Naive thymus-derived CD4-positive, alpha-beta T cell (primary cell): ENCODE measurements at regions of chr18 and their contacts with region 1.

Region 1: GRCh38 chr18:45690975-45691815 is 32.8 kb upstream of the SLC14A1 start:
- DNase-seq: peak; percentile 42 to 80 (median 70)
- ATAC-seq: peak; percentile 30
- H3K4me3 ChIP-seq: no peak overlapping the region
- H3K4me3 Mint-ChIP-seq: peak overlapping the region in 3 of 10 donors; percentile 19 to 60 (median 31)
- H3K27ac ChIP-seq: no peak overlapping the region
- H3K27ac Mint-ChIP-seq: peak overlapping the region in 2 of 9 donors; percentile 14 to 15
- H3K4me1 ChIP-seq: peaks cover 38 to 42% of the 10 kb centered on the region in 2 donors
- H3K4me1 Mint-ChIP-seq: peaks cover 29 to 53% (median 43%) of the 10 kb centered on the region in 7 donors
- H3K27me3 ChIP-seq: no peaks in the 10 kb centered on the region
- H3K27me3 Mint-ChIP-seq: peaks cover 0 to 58% (median 5%) of the 10 kb centered on the region in 5 donors

Region 2: GRCh38 chr18:45621061-45621511 is 70.1 kb before region 1 on chr18:
- CTCF ChIA-PET with region 1: no interaction called
- POLR2A ChIA-PET with region 1: no interaction called
- intact Hi-C with region 1: loop called in 1 of 2 experiments (anchors 1 kb)
- DNase-seq: peak in 8 of 9 donors; percentile 8 to 61 (median 40)
- ATAC-seq: peak; percentile 76
- H3K4me3 ChIP-seq: no peak overlapping the region
- H3K4me3 Mint-ChIP-seq: no peak overlapping the region
- H3K27ac ChIP-seq: no peak overlapping the region
- H3K27ac Mint-ChIP-seq: no peak overlapping the region
- H3K4me1 ChIP-seq: no peaks in the 10 kb centered on the region
- H3K4me1 Mint-ChIP-seq: no peaks in the 10 kb centered on the region
- H3K27me3 ChIP-seq: no peaks in the 10 kb centered on the region
- H3K27me3 Mint-ChIP-seq: peaks cover 0 to 27% (median 10%) of the 10 kb centered on the region in 5 donors

Region 3: DNA sequence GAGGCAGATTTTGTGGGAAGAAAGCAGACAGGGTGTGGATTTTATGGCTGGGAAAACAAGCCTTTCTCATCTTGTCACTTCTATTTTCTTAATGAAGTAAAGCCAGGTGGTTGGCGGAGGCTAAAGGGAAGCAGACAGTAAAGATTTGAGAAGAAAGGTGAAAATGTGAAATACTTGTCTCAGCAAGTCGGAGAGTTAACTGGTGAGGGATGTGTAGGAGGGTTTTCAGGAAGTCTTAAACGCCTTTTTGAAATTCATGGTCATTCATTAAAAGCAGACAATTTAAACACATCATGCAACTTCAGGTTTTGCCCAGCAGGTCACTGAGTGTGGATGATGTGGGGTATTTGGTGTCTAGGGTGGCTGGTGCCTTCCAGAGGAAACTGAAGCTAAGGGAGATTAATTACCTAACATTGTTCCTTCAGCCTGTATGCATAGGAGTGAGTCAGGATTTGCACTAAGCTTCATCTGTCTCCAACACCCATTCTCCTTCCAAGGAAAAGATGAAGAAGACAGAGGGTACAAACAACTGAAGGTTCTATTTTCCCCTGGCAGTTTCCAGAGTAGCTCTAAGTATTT is 55.2 kb before region 1 on chr18:
- CTCF ChIA-PET with region 1: no interaction called
- POLR2A ChIA-PET with region 1: no interaction called
- intact Hi-C with region 1: no loop called
- DNase-seq: no peak
- ATAC-seq: no peak
- H3K4me3 ChIP-seq: no peak overlapping the region
- H3K4me3 Mint-ChIP-seq: no peak overlapping the region
- H3K27ac ChIP-seq: no peak overlapping the region
- H3K27ac Mint-ChIP-seq: no peak overlapping the region
- H3K4me1 ChIP-seq: no peaks in the 10 kb centered on the region
- H3K4me1 Mint-ChIP-seq: no peaks in the 10 kb centered on the region
- H3K27me3 ChIP-seq: no peaks in the 10 kb centered on the region
- H3K27me3 Mint-ChIP-seq: peaks cover 0 to 6% (median 0%) of the 10 kb centered on the region in 5 donors

Region 4: GRCh38 chr18:45678850-45679249 is 12.3 kb before region 1 on chr18:
- CTCF ChIA-PET with region 1: no interaction called
- POLR2A ChIA-PET with region 1: interaction called, 6 read pairs
- intact Hi-C with region 1: loop called in 1 of 2 experiments (anchors 1 kb)
- DNase-seq: no peak
- ATAC-seq: no peak
- H3K4me3 ChIP-seq: no peak overlapping the region
- H3K4me3 Mint-ChIP-seq: no peak overlapping the region
- H3K27ac ChIP-seq: no peak overlapping the region
- H3K27ac Mint-ChIP-seq: peak overlapping the region in 1 of 9 donors; percentile 22
- H3K4me1 ChIP-seq: peaks cover 0 to 2% of the 10 kb centered on the region in 2 donors
- H3K4me1 Mint-ChIP-seq: peaks cover 0 to 28% (median 12%) of the 10 kb centered on the region in 7 donors
- H3K27me3 ChIP-seq: no peaks in the 10 kb centered on the region
- H3K27me3 Mint-ChIP-seq: peaks cover 0 to 84% (median 3%) of the 10 kb centered on the region in 5 donors

Region 5: DNA sequence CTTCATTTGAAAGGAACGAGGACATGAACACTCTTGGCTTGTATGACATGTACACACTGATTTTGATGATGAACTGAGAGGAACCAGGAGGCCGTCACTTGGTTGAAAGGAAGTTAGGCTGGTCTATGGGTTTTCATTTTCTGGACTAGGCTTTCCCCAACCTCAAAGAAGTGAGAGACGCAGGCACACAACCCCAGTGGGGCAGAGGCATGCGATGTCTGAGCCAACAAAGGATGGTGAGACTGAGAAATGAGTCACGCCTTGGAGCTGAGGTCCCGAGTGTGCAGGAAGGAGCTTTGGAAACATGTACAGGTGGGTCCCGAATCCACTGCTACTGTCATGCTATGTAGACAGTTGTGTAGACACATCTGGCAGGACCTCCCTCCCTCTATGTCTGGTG is 158.3 kb after region 1 on chr18:
- CTCF ChIA-PET with region 1: interaction called, 3 read pairs
- POLR2A ChIA-PET with region 1: no interaction called
- intact Hi-C with region 1: loop called in 1 of 2 experiments (anchors 1 kb)
- DNase-seq: no peak
- ATAC-seq: no peak
- H3K4me3 ChIP-seq: no peak overlapping the region
- H3K4me3 Mint-ChIP-seq: no peak overlapping the region
- H3K27ac ChIP-seq: no peak overlapping the region
- H3K27ac Mint-ChIP-seq: peak overlapping the region in 2 of 9 donors; percentile 12 to 32
- H3K4me1 ChIP-seq: no peaks in the 10 kb centered on the region
- H3K4me1 Mint-ChIP-seq: peaks cover 0 to 6% (median 4%) of the 10 kb centered on the region in 7 donors
- H3K27me3 ChIP-seq: no peaks in the 10 kb centered on the region
- H3K27me3 Mint-ChIP-seq: no peaks in the 10 kb centered on the region

Region 6: GRCh38 chr18:45967007-45967706 is 276.0 kb after region 1 on chr18 and contains the start of gene EPG5:
- CTCF ChIA-PET with region 1: no interaction called
- POLR2A ChIA-PET with region 1: no interaction called
- intact Hi-C with region 1: loop called (anchors 1 to 2 kb)
- DNase-seq: peak; percentile 73 to 91 (median 90)
- ATAC-seq: peak; percentile 98
- H3K4me3 ChIP-seq: peak within 1 kb of the TSS; percentile 79
- H3K4me3 Mint-ChIP-seq: peak within 1 kb of the TSS; percentile 94 to 100 (median 97)
- H3K27ac ChIP-seq: peak within 1 kb of the TSS; percentile 86
- H3K27ac Mint-ChIP-seq: peak within 1 kb of the TSS; percentile 84 to 98 (median 97)
- H3K4me1 ChIP-seq: peaks cover 14 to 25% of the 10 kb centered on the region in 2 donors
- H3K4me1 Mint-ChIP-seq: peaks cover 33 to 55% (median 47%) of the 10 kb centered on the region in 7 donors
- H3K27me3 ChIP-seq: no peaks in the 10 kb centered on the region
- H3K27me3 Mint-ChIP-seq: no peaks in the 10 kb centered on the region
- total RNA-seq, gene EPG5: 26.0 to 54.8 (median 44.7) TPM

Region 7: DNA sequence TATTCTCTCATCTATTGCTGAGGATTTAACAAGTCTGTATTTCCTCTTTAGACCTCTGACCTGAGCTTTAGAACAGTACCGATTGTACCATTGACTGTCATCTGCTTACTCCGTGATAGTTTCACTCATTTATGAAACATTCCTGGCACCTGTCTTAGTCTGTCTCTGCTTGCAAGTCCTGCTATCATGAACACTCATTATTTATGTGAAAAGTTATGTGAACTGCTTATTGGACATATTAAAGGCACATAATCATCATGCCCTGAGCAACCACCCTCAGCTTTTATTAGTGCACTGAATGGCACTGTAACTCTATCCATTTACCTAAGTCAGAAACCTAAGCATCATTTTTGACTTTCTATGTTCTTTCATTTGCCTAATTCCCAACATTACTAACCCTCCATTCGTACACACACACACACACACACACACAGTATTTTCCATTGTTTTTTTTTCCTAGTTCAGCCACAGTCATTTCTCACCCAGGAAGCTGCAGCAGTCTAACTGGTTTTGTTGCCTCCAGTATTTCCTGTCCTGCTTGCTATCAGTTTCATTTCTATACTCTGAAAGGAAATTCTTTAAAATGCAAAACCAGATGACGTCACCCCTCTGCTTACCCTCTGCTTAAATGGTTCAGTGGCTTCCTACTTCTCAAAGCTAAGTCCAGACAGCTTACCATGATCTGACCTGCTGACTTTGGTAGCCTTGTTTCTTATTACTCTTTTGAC is 559.1 kb after region 1 on chr18:
- CTCF ChIA-PET with region 1: no interaction called
- POLR2A ChIA-PET with region 1: interaction called, 3 read pairs
- intact Hi-C with region 1: loop called in 1 of 2 experiments (anchors 10 kb)
- DNase-seq: peak in 8 of 9 donors; percentile 32 to 82 (median 72)
- ATAC-seq: peak; percentile 94
- H3K4me3 ChIP-seq: peak overlapping the region; percentile 41
- H3K4me3 Mint-ChIP-seq: peak overlapping the region; percentile 74 to 95 (median 83)
- H3K27ac ChIP-seq: peak overlapping the region; percentile 75
- H3K27ac Mint-ChIP-seq: peak overlapping the region; percentile 89 to 98 (median 95)
- H3K4me1 ChIP-seq: peaks cover 19 to 21% of the 10 kb centered on the region in 2 donors
- H3K4me1 Mint-ChIP-seq: peaks cover 35 to 74% (median 69%) of the 10 kb centered on the region in 7 donors
- H3K27me3 ChIP-seq: no peaks in the 10 kb centered on the region
- H3K27me3 Mint-ChIP-seq: no peaks in the 10 kb centered on the region